ENCODE measurements at regions of chr12 and their contacts with region 1.

Region 1: GRCh38 chr12:108884116-108885012 is 4.5 kb downstream of the DAO start:
- DNase-seq: peak; percentile 83
- ATAC-seq: peak; percentile 78 to 91
- H3K4me3 ChIP-seq: no peak overlapping the region
- H3K27ac ChIP-seq: no peak overlapping the region
- H3K4me1 ChIP-seq: peaks cover 8% of the 10 kb centered on the region
- H3K27me3 ChIP-seq: no peaks in the 10 kb centered on the region
- CTCF ChIP-seq: peak; percentile 64

Region 2: DNA sequence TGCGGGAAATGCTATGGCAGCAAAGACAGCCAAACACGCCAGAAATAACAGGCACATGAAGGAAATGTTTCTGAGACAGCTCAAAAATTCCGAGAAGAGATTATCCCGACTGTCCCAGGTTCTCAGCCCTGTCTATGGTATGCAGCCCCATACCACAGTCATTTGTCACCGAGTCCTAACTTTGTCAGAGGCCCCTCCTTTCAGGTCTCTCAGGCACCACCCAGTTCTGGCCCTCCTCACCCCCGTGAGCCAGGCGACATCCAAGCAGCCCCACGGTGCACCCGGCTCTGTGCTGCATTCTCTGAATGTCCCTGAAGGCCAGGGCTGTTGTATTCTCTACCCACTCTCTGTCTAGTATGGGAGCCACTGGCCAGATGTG is 51.0 kb before region 1 on chr12:
- intact Hi-C with region 1: no loop called
- DNase-seq: peak; percentile 64
- ATAC-seq: peak; percentile 74 to 76
- H3K4me3 ChIP-seq: no peak overlapping the region
- H3K27ac ChIP-seq: peak overlapping the region; percentile 85
- H3K4me1 ChIP-seq: peaks cover 80% of the 10 kb centered on the region
- H3K27me3 ChIP-seq: no peaks in the 10 kb centered on the region
- CTCF ChIP-seq: no peak

Region 3: DNA sequence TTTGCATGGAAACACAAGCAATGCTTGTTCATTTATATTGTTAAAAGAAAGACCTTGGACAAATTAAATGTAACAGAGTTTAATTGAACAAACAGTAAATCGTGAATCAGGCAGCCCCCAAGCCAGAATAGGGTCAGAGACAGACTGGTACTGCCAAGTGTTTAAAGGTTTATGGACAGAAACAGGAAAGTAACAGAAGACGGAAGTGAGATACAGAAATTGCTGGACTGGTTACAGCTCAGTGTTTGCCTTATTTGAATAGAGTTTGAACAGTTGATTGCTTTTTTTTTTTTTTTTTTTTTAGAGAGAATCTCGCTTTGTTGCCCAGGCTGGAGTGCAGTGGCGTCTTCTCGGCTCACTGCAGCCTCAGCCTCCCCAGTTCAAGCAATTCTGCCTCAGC is 45.8 kb after region 1 on chr12:
- intact Hi-C with region 1: no loop called
- DNase-seq: no peak
- ATAC-seq: no peak
- H3K4me3 ChIP-seq: no peak overlapping the region
- H3K27ac ChIP-seq: no peak overlapping the region
- H3K4me1 ChIP-seq: no peaks in the 10 kb centered on the region
- H3K27me3 ChIP-seq: no peaks in the 10 kb centered on the region
- CTCF ChIP-seq: no peak

Region 4: DNA sequence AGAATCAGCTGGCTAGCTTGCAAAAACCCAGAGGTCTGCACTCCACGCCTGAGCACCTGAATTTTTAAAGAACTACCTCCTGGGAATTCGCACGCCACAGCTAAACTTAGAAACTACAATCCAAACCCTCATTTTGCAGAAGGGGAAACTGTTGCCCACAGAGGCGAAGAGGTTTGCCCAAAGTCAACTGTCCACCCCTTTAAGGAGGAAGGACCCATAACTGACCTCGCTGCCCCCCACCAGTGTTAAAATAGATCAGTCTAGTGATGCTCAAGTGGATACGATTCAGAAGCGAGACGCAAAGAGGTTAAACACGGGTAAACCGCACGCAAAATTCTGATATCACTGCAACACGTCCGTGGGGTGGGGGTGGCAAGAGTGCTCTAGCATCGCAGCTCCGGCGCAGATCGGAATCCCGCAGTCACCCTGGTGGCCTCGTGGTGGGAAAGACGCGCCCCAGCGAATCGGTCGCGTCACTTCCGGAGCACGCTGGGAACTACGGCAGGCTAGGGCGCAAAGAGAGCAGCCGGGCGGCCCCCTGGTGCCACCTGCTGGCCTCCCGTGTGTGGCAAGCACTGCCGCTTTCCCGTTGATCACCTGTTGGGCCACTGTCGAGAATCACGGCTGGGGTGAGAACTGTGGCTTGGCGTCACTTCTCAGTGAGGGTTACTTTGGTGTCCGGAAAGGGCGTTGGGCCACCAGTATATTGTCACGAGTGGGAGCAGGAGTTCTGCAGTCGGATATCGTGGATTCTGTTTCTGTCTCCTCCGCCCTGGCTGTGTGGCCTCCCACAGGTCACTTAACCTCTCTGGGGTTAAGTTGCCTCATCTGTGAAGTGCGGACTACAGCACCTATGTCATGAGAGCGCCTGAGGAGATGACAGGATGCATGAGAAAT is 208.9 kb after region 1 on chr12 and contains the start of gene ALKBH2:
- intact Hi-C with region 1: loop called (anchors 10 kb)
- DNase-seq: peak; percentile 97
- ATAC-seq: peak; percentile 88 to 91
- H3K4me3 ChIP-seq: peak within 1 kb of the TSS; percentile 64
- H3K27ac ChIP-seq: peak within 1 kb of the TSS; percentile 81
- H3K4me1 ChIP-seq: peaks cover 25% of the 10 kb centered on the region
- H3K27me3 ChIP-seq: no peaks in the 10 kb centered on the region
- CTCF ChIP-seq: peak; percentile 98
- total RNA-seq, gene ALKBH2: 9.6 TPM

Region 5: GRCh38 chr12:109209082-109209481 is 324.7 kb after region 1 on chr12:
- intact Hi-C with region 1: no loop called
- DNase-seq: no peak
- ATAC-seq: no peak
- H3K4me3 ChIP-seq: no peak overlapping the region
- H3K27ac ChIP-seq: no peak overlapping the region
- H3K4me1 ChIP-seq: no peaks in the 10 kb centered on the region
- H3K27me3 ChIP-seq: no peaks in the 10 kb centered on the region
- CTCF ChIP-seq: no peak

Measured in lower lobe of right lung (tissue), 2 donors.